ENCODE measurements at regions of chr12 and their contacts with region 1.

Region 1: GRCh38 chr12:53295070-53295890 is at the start of gene PFDN5:
- DNase-seq: peak; percentile 87 to 91
- ATAC-seq: peak; percentile 89 to 94 (median 92)
- H3K4me3 ChIP-seq: peak within 1 kb of the TSS; percentile 69 to 93 (median 82)
- H3K27ac ChIP-seq: peak within 1 kb of the TSS; percentile 14 to 93 (median 89)
- H3K4me1 ChIP-seq: peaks cover 11 to 48% (median 40%) of the 10 kb centered on the region in 9 donors
- H3K27me3 ChIP-seq: no peaks in the 10 kb centered on the region
- CTCF ChIP-seq: peak in 3 of 9 donors; percentile 11 to 25 (median 23)
- total RNA-seq, gene PFDN5: 307 to 413 (median 339) TPM

Region 2: DNA sequence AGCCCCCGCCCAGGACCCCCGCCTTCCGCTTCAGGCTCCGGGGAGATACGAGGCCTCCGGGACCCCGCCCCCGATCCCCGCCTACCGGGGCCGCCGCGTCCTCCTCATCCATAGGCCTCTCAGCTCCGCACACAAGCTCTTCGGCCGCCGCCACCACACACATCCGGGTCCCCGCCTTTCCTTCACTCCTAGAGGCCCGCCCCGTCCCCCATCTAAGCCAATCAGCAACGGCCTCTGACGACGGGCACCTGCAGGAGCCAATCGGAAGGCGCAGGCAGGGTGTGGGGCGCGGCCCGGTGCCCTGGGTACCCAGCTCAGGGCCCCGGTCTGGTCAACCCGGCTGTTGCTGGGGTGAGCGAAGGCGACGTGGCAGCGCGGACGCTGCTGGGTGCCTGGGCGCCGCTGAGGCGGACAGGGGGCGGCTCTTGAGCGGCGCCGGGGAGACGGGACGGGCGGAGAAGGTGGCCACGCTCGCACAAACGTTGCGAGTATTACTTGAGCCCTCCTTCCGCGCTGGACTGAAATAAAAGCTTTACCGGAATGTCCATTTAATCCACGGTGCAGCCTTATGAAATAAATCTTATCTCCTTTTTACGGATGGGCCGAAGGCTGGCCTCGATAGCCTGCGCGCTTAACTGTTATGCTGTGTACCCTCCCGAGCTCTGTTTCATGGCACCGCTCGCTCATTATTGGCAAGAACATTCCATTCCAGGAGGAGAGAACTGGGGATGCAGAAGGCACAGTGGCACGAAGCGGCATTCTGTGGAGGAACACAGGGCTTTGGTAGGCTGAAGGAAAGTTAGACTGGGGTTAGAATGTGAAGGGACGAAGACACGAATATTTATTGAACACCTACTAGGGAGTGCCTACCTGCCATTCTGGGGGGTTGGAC is 215.8 kb before region 1 on chr12 and contains the start of gene SPRYD3:
- intact Hi-C with region 1: loop called in 1 of 10 experiments (anchors 10 kb)
- DNase-seq: peak; percentile 96 to 97
- ATAC-seq: peak; percentile 98 to 100 (median 99)
- H3K4me3 ChIP-seq: peak within 1 kb of the TSS; percentile 55 to 95 (median 80)
- H3K27ac ChIP-seq: peak within 1 kb of the TSS; percentile 86 to 98 (median 96)
- H3K4me1 ChIP-seq: peaks cover 3 to 39% (median 24%) of the 10 kb centered on the region in 9 donors
- H3K27me3 ChIP-seq: no peaks in the 10 kb centered on the region
- CTCF ChIP-seq: no peak
- total RNA-seq, gene SPRYD3: 40.9 to 63.0 (median 47.4) TPM

Region 3: GRCh38 chr12:53220801-53221202 is 74.5 kb before region 1 on chr12:
- intact Hi-C with region 1: loop called in 1 of 10 experiments (anchors 2 kb)
- DNase-seq: peak; percentile 93 to 94
- ATAC-seq: peak; percentile 87 to 93 (median 90)
- H3K4me3 ChIP-seq: peak overlapping the region; percentile 71 to 96 (median 76)
- H3K27ac ChIP-seq: peak overlapping the region; percentile 96 to 100 (median 99)
- H3K4me1 ChIP-seq: peaks cover 9 to 83% (median 60%) of the 10 kb centered on the region in 9 donors
- H3K27me3 ChIP-seq: no peaks in the 10 kb centered on the region
- CTCF ChIP-seq: no peak

Region 4: GRCh38 chr12:53365245-53365904 is 70.1 kb after region 1 on chr12:
- intact Hi-C with region 1: no loop called
- DNase-seq: no peak
- ATAC-seq: peak in 7 of 8 donors; percentile 28 to 83 (median 56)
- H3K4me3 ChIP-seq: no peak overlapping the region
- H3K27ac ChIP-seq: peak overlapping the region in 2 of 10 donors; percentile 22 to 85
- H3K4me1 ChIP-seq: peaks cover under 1 to 44% (median 3%) of the 10 kb centered on the region in 9 donors
- H3K27me3 ChIP-seq: no peaks in the 10 kb centered on the region
- CTCF ChIP-seq: no peak

Region 5: GRCh38 chr12:53379389-53380103 is 84.3 kb after region 1 on chr12:
- intact Hi-C with region 1: no loop called
- DNase-seq: peak; percentile 92 to 100
- ATAC-seq: peak; percentile 84 to 92 (median 90)
- H3K4me3 ChIP-seq: peak overlapping the region; percentile 44 to 88 (median 64)
- H3K27ac ChIP-seq: peak overlapping the region; percentile 92 to 99 (median 98)
- H3K4me1 ChIP-seq: peaks cover 18 to 46% (median 44%) of the 10 kb centered on the region in 9 donors
- H3K27me3 ChIP-seq: no peaks in the 10 kb centered on the region
- CTCF ChIP-seq: no peak

Region 6: GRCh38 chr12:53623548-53624385 is 328.5 kb after region 1 on chr12:
- intact Hi-C with region 1: no loop called
- DNase-seq: peak in 1 of 2 donors; percentile 36
- ATAC-seq: no peak
- H3K4me3 ChIP-seq: peak overlapping the region in 9 of 10 donors; percentile 57 to 74 (median 69)
- H3K27ac ChIP-seq: peak overlapping the region; percentile 24 to 98 (median 92)
- H3K4me1 ChIP-seq: peaks cover 6 to 58% (median 42%) of the 10 kb centered on the region in 9 donors
- H3K27me3 ChIP-seq: no peaks in the 10 kb centered on the region
- CTCF ChIP-seq: no peak